ENCODE measurements at regions of chr6 and their contacts with region 1.

Region 1: DNA sequence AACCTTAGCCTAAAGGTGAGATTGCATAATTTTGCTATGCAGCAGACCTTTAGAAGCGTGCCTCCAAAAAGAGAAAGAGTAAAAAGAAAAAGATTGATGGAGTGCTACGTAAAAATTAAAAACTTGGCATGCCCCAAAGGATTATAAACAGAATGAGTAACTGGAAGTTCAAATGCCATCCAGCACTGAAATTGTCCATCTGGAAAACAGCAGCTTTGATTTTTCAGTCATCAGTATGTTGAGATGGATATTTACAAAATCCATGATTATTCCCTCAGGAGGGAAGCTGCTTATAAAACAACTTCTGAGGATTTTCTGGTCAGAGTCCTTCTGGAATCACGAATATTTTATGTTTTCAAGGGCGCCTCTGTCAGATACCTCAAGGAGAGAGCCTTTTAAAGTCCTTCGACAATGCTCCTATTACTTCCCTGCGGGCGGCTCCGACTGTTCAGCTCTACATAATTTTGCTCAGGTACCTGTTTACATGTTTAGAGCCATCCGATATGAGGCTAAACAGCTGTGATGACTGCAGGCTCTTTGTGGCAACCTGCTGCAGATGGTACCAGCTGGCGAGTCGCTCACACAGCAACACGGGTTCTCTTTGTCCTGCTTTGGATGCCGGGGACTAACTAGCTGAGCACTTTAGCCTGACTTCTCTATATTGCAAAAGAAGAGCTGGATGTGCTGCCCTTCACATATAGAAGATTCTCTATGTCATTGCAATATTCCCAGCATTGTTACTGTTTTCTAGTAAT is 83.3 kb downstream of the RCAN2 start:
- DNase-seq: no peak
- CTCF ChIP-seq: no peak

Region 2: GRCh38 chr6:46090115-46091079 is 317.6 kb before region 1 on chr6:
- in situ Hi-C with region 1: loop called (anchors 10 kb)
- DNase-seq: peak; percentile 60
- CTCF ChIP-seq: peak; percentile 72

Region 3: GRCh38 chr6:46217671-46218131 is 190.3 kb before region 1 on chr6:
- in situ Hi-C with region 1: loop called (anchors 10 kb)
- DNase-seq: peak; percentile 42
- CTCF ChIP-seq: no peak

Measured in GM13977 (cell line).